ENCODE measurements at regions of chr19 and their contacts with region 1.

Region 1: DNA sequence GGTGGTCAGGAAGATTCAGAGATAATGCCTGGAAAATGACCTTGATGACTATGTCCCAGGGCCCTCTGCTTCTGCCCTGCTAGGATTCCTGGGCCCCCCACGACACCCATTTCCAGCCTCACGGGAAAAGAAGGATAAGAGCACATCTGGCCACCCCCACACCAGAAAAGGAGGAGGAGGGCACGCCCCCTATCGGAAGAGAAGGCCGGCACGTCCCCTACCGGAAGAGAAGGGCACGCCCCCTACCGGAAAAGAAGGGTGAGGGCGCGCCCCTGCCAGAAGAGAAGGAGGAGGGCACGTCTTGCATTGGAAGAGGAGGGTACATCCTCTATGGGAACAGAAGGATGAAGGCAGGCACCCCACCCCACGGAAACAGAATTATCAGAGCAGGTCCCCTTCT is 84.3 kb downstream of the IER2 start:
- DNase-seq: peak; percentile 46 to 63
- H3K4me3 ChIP-seq: no peak overlapping the region
- H3K27ac ChIP-seq: no peak overlapping the region
- H3K4me1 ChIP-seq: no peaks in the 10 kb centered on the region
- H3K27me3 ChIP-seq: no peaks in the 10 kb centered on the region
- CTCF ChIP-seq: peak; percentile 19 to 68 (median 36)
- POLR2A ChIP-seq: no peak

Region 2: GRCh38 chr19:12974301-12975220 is 260.0 kb before region 1 on chr19:
- intact Hi-C with region 1: loop called (anchors 10 kb)
- DNase-seq: peak in 1 of 2 donors; percentile 36
- H3K4me3 ChIP-seq: no peak overlapping the region
- H3K27ac ChIP-seq: peak overlapping the region in 1 of 3 donors; percentile 43
- H3K4me1 ChIP-seq: peaks cover 3 to 4% of the 10 kb centered on the region in 2 donors
- H3K27me3 ChIP-seq: no peaks in the 10 kb centered on the region
- CTCF ChIP-seq: no peak
- POLR2A ChIP-seq: no peak

Measured in thyroid gland (tissue), 4 donors.